HEK293 (cell line): ENCODE measurements at regions of chr3 and their contacts with region 1.

Region 1: GRCh38 chr3:71955240-71956068 is 170.5 kb upstream of the PROK2 start:
- H3K4me3 ChIP-seq: no peak overlapping the region
- H3K27ac ChIP-seq: peak overlapping the region; percentile 34; the same call in 1 of the 2 replicates
- H3K4me1 ChIP-seq: 0 out of 2 replicates have a peak, but pooled peaks cover 5% of the 10 kb centered on the region
- CTCF ChIP-seq: peak; percentile 41; the same call in 1 of the 2 replicates

Region 2: GRCh38 chr3:71641674-71642073 is 313.8 kb before region 1 on chr3:
- CTCF ChIA-PET with region 1: no interaction called
- POLR2A ChIA-PET with region 1: no interaction called
- H3K4me3 ChIP-seq: no peak overlapping the region
- H3K27ac ChIP-seq: no peak overlapping the region
- H3K4me1 ChIP-seq: no peaks in the 10 kb centered on the region; the same call in 1 of the 2 replicates
- CTCF ChIP-seq: no peak

Region 3: DNA sequence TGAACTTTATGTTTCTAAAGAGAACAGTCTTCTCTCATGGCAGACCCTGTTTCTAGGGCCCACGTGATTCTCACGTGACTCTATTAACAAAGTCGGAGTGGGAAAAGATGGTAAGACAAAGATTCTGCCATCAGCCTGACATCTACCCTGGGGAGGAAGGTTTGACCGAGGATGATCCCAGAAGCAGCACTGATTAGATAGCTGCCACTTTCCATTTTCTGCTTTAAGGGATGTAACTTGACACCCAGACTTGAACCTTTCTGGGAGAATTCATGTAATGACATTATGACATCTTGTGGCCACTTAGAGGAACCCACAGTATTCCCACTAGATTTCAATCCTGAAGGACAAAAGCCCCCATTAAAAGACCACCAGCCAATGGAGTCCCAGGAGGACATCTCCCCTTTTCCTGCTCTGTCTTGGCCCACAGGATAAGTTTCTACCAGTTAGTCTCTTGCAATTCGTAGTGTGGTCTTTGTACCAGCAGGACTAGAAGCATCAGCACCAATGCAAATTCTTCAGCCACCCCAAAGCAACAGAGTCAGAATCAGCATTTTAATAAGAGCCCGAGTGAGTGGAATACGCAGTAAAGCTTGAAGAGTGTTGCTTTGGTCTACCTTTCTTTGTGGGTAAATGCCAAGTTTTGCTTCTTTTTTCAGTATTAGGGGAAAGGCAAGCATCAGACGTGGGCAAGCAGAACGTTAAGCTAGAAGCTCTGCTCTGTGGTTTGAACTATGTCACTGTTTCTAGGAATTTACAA is 310.0 kb after region 1 on chr3:
- CTCF ChIA-PET with region 1: interaction called, 10 read pairs
- POLR2A ChIA-PET with region 1: no interaction called
- H3K4me3 ChIP-seq: no peak overlapping the region
- H3K27ac ChIP-seq: no peak overlapping the region
- H3K4me1 ChIP-seq: no peaks in the 10 kb centered on the region; the same call in 1 of the 2 replicates
- CTCF ChIP-seq: peak; percentile 35; the same call in 1 of the 2 replicates